ENCODE measurements at regions of chr3 and their contacts with region 1.

Region 1: GRCh38 chr3:124419303-124419702 is 310.9 kb upstream of the UMPS start:
- DNase-seq: no peak
- ATAC-seq: no peak
- H3K4me3 ChIP-seq: no peak overlapping the region
- H3K27ac ChIP-seq: no peak overlapping the region
- H3K4me1 ChIP-seq: no peaks in the 10 kb centered on the region
- H3K27me3 ChIP-seq: peaks cover 22% of the 10 kb centered on the region
- CTCF ChIP-seq: no peak

Region 2: GRCh38 chr3:124347418-124347817 is 71.9 kb before region 1 on chr3:
- CTCF ChIA-PET with region 1: no interaction called
- POLR2A ChIA-PET with region 1: no interaction called
- in situ Hi-C with region 1: no loop called
- intact Hi-C with region 1: no loop called
- DNase-seq: no peak
- ATAC-seq: no peak
- H3K4me3 ChIP-seq: no peak overlapping the region
- H3K27ac ChIP-seq: no peak overlapping the region
- H3K4me1 ChIP-seq: no peaks in the 10 kb centered on the region
- H3K27me3 ChIP-seq: peaks cover 15% of the 10 kb centered on the region
- CTCF ChIP-seq: peak; percentile 29

Region 3: DNA sequence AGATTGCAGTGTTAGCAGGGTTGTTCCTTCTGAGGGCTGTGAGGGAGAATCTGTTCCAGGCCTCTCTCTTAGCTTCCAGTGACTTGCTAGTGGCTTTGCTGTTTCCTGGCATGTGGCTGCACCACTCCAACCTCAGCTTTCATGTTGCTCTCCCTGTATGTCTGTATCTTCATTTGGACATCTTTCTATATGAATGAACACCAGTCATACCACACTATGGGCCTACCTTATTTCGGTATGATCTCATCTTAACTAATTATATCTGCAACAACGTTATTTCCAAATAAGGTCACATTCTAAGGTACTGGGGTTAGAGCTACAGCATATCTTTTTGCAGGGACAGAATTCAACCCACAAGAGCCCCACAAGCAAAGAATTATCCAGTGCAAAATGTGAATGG is 45.8 kb before region 1 on chr3:
- CTCF ChIA-PET with region 1: no interaction called
- POLR2A ChIA-PET with region 1: interaction called, 13 read pairs
- in situ Hi-C with region 1: no loop called
- intact Hi-C with region 1: no loop called
- DNase-seq: no peak
- ATAC-seq: no peak
- H3K4me3 ChIP-seq: no peak overlapping the region
- H3K27ac ChIP-seq: no peak overlapping the region
- H3K4me1 ChIP-seq: no peaks in the 10 kb centered on the region
- H3K27me3 ChIP-seq: peaks cover 13% of the 10 kb centered on the region
- CTCF ChIP-seq: no peak

Region 4: DNA sequence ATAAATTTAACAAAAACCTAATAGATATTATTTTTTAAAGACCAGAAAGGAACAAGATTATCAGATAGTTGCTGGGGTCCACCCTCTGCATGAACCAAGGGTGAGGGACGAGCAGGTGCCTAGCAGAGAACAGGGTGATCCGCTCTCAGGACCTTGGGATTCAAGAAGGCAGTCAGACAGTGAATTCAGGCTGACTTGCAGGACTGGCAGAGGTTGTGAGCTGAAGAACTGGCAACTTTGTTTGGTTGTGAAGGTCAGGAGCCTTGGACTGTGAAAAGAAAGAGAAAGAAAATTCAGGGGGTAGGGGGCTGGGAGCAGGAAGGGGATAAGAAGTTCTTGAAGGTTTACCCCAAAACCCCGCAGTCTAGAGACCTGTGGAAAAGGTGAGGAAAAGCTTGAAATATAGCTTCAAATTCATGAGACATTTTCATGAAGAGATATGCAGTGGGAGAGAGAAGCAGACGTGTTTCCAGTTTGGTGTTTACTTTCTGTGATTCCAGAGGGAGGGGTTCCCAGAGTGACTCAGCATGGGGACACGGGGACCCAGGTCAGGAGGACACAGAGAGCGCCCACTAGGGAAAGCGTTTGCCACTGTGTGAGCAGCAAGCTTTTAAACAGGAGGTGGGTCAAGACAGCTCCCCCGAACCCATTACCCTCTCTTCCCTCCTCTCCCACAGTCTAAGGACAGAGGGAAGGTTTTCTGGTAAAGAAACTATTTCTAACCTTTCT is 93.7 kb after region 1 on chr3:
- CTCF ChIA-PET with region 1: no interaction called
- POLR2A ChIA-PET with region 1: no interaction called
- in situ Hi-C with region 1: no loop called
- intact Hi-C with region 1: no loop called
- DNase-seq: no peak
- ATAC-seq: no peak
- H3K4me3 ChIP-seq: no peak overlapping the region
- H3K27ac ChIP-seq: no peak overlapping the region
- H3K4me1 ChIP-seq: no peaks in the 10 kb centered on the region
- H3K27me3 ChIP-seq: peaks cover 29% of the 10 kb centered on the region
- CTCF ChIP-seq: no peak